PC-3 (cell line): ENCODE measurements at regions of chr10 and their contacts with region 1.

Region 1: GRCh38 chr10:22988581-22989360 is 60.9 kb downstream of the ARMC3 start:
- DNase-seq: peak; percentile 73
- ATAC-seq: peak; percentile 55
- H3K4me3 ChIP-seq: peak overlapping the region; percentile 33; the same call in 1 of the 2 replicates
- H3K27ac ChIP-seq: no peak overlapping the region
- H3K4me1 ChIP-seq: no peaks in the 10 kb centered on the region
- H3K27me3 ChIP-seq: no peaks in the 10 kb centered on the region
- CTCF ChIP-seq: peak; percentile 90

Region 2: DNA sequence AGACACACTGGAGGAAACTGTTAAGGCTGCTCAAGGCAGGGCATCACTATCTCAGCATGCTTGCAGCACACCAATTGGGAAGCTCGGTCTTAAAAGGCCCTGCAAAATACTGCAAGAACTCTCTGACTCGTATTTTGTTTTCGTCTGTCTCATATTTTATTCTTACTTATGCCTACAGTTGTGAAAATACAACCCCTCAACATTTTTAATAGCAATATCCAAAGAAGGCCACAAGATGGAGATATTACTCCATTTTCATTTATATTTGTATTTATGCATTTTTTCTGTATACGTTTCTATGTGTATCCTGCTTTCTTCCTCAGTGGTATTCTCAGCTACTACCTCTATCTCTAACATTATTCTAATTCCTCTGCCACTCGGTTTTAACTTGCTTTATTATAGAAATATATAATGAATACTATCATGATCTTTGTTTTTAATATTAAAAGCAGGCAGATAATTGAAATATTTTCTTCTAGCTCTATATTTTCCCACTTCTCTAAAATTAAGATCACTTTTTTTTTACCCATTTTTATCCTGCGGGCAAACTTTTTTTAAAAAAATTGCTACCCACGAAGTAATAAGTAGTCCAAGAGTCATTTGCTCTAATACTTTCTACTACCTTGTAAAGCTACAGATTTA is 995.3 kb before region 1 on chr10:
- CTCF ChIA-PET with region 1: interaction called, 8 read pairs
- POLR2A ChIA-PET with region 1: no interaction called
- intact Hi-C with region 1: loop called (anchors 2 kb)
- DNase-seq: peak; percentile 61
- ATAC-seq: no peak
- H3K4me3 ChIP-seq: no peak overlapping the region
- H3K27ac ChIP-seq: peak overlapping the region; percentile 0; the same call in 1 of the 2 replicates
- H3K4me1 ChIP-seq: peaks cover 17% of the 10 kb centered on the region; the same call in 1 of the 2 replicates
- H3K27me3 ChIP-seq: no peaks in the 10 kb centered on the region
- CTCF ChIP-seq: peak; percentile 63

Region 3: DNA sequence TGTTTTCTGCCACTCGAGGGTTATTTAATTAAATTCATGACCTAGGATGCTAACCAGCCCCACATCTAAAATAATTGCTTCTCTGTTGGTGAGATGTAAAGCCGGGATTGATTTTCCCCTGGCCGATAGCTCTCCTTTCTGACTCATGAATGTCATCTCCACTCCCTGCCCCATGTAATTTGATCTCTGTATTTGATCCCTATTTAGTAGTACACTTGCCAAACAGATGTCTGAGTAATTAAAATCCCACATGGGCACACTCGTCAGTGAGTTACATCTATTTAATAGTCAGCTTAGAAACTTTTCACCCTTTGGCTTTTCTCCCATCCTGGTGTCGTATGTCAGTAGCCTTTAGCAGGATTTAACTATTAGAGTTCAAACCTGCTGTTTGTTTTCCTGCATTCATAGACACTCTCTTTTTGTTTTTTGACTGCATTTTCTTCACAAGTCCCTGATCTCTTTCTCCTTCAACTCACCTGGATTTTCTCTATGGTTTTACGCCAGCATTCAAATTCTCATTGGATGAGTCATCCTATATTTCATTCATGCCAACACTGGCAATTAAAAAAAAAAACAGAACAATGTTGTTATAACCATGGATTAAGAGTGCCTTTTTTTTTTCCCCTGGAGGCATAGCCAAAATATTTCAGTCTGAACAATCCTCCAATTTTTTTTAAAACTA is 560.7 kb before region 1 on chr10:
- CTCF ChIA-PET with region 1: no interaction called
- POLR2A ChIA-PET with region 1: no interaction called
- intact Hi-C with region 1: loop called (anchors 5 kb)
- DNase-seq: peak; percentile 87
- ATAC-seq: peak; percentile 79
- H3K4me3 ChIP-seq: peak overlapping the region; percentile 57
- H3K27ac ChIP-seq: peak overlapping the region; percentile 95
- H3K4me1 ChIP-seq: peaks cover 43% of the 10 kb centered on the region
- H3K27me3 ChIP-seq: no peaks in the 10 kb centered on the region
- CTCF ChIP-seq: no peak

Region 4: GRCh38 chr10:22505911-22506685 is 482.7 kb before region 1 on chr10:
- CTCF ChIA-PET with region 1: no interaction called
- POLR2A ChIA-PET with region 1: no interaction called
- intact Hi-C with region 1: no loop called
- DNase-seq: peak; percentile 30
- ATAC-seq: peak; percentile 42; the same call in 1 of the 2 replicates
- H3K4me3 ChIP-seq: no peak overlapping the region
- H3K27ac ChIP-seq: no peak overlapping the region
- H3K4me1 ChIP-seq: no peaks in the 10 kb centered on the region
- H3K27me3 ChIP-seq: no peaks in the 10 kb centered on the region
- CTCF ChIP-seq: no peak

Region 5: DNA sequence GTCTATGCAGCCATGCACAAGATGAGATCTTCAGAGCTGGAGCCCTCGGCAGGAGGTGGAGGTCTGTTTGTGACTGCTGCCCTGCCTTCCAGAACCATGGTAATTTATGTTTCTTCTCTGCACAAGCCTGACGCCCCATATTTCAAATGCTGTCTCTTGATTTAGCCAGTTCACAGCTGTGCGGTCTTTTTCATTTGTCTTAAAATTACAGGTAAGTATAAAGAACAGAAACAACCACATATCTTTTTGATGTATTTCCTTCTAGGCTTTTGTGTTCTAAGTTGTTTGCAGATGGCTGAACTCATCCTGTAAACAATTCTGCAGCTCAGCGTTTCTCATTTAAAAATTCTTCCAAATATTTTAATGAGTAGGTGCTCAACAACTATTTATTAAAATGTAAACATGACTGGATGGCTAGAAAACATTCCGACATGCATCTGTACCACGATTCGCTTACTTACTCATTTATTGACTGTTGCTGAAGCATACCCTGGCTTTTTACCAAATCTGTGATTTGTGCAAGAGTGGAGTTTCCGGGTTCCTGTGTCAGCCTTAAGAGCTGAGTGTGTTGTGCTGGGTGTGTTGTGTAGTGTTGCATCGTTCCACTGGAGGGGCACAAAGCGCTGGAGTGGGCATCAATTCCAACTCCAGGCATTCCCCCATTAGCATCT is 333.3 kb before region 1 on chr10:
- CTCF ChIA-PET with region 1: no interaction called
- POLR2A ChIA-PET with region 1: no interaction called
- intact Hi-C with region 1: loop called (anchors 5 kb)
- DNase-seq: peak; percentile 93
- ATAC-seq: peak; percentile 87
- H3K4me3 ChIP-seq: peak overlapping the region; percentile 60
- H3K27ac ChIP-seq: peak overlapping the region; percentile 88
- H3K4me1 ChIP-seq: peaks cover 49% of the 10 kb centered on the region
- H3K27me3 ChIP-seq: no peaks in the 10 kb centered on the region
- CTCF ChIP-seq: no peak; the same call in 1 of the 2 replicates

Region 6: DNA sequence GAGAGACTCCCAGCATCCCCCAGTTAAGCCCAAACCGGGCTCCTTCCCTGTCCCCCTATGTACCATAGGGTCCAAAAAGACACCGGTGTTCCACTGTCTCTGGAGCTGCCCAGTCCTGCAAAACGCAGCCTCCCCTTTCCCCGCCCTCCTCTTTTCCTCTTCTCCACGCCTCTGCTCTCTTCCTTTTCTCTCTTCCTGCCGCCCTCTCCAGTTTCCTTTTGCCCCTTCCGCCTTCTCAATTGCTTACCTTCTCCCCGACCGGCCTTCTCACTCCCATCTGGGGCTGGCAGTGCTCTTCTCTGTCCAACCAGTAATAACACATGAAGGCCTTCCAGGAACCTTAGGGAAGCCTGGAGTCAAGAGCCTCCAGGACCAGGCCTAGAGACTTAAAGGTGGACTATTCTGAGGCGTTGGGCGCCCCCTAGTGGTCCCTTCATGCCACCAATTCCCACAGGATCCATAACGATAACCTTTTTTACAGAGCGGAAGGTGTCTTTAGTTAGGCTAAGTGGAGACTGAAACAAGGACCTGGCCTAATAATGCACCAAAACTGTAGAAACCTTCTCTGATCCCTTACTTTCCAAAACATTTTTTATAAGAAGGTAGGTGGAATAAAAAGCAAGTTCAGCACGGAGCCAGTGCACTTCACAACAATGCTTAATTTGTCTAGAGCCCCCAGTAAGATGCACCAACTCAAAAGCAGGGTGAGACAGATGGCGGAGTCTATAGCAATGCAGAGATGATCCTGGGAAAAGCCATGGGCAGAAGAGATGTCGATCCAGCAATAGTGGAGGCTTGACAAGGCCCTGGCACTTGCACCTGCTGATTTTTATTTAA is 79.4 kb after region 1 on chr10:
- CTCF ChIA-PET with region 1: no interaction called
- POLR2A ChIA-PET with region 1: no interaction called
- intact Hi-C with region 1: loop called (anchors 2 kb)
- DNase-seq: peak; percentile 79
- ATAC-seq: peak; percentile 96
- H3K4me3 ChIP-seq: no peak overlapping the region
- H3K27ac ChIP-seq: no peak overlapping the region
- H3K4me1 ChIP-seq: peaks cover 9% of the 10 kb centered on the region; the same call in 1 of the 2 replicates
- H3K27me3 ChIP-seq: no peaks in the 10 kb centered on the region
- CTCF ChIP-seq: peak; percentile 89